OCI-LY7 (cell line): ENCODE measurements at regions of chr20 and their contacts with region 1.

Region 1: GRCh38 chr20:62065669-62066338 is at the start of gene TAF4:
- DNase-seq: peak; percentile 88
- H3K4me3 ChIP-seq: peak within 1 kb of the TSS; percentile 75
- H3K27ac ChIP-seq: peak within 1 kb of the TSS; percentile 66
- H3K4me1 ChIP-seq: peaks cover 46% of the 10 kb centered on the region
- CTCF ChIP-seq: no peak
- total RNA-seq, gene TAF4: 6.7 and 11.2 TPM in 2 replicates

Region 2: DNA sequence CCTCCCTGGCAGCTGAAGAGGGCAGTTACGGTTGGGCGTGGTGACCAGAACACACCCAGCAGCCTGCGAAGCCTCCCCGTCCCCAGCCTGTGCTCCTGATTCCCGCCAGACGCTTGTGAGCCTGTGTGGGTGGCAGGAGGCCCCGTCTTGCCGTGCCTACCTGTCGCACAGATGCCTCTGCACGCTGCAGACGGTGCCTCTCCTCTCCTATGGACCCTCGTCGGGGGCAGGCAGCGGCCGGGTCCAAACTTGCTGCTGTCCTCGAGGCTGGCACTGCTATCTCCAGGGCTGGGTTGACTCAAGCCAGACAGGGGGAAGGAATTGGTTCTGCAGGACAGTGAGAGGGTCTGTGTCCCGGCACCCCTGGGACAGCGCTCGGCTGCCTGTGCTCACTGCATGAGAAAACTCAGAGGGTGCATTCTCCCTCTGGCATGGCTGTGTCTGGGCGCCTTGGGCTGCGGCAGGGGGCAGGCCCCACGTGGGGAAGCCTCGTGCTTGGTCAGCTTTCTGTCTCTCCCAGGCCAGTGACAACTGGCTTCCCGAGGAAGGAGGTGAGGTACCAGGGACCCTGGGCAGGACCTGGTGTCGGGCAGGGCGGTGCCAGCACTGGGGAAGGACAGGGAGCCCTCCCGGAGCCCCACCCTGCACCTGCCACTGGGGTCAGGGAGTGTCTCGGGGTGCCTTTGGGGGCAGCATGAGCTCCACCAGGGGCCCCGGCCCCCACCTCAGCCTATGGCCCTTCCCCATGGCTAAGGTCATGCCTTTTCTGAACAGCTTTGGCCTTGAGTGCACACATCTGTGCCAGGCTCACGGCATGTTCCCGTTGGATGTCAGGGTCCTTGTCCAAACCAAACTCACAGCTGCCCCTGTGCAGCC is 127.6 kb before region 1 on chr20:
- CTCF ChIA-PET with region 1: no interaction called
- POLR2A ChIA-PET with region 1: no interaction called
- intact Hi-C with region 1: no loop called
- DNase-seq: no peak
- H3K4me3 ChIP-seq: no peak overlapping the region
- H3K27ac ChIP-seq: no peak overlapping the region
- H3K4me1 ChIP-seq: no peaks in the 10 kb centered on the region
- CTCF ChIP-seq: no peak

Region 3: GRCh38 chr20:62002882-62003480 is 62.8 kb before region 1 on chr20:
- CTCF ChIA-PET with region 1: no interaction called
- POLR2A ChIA-PET with region 1: no interaction called
- intact Hi-C with region 1: loop called (anchors 5 kb)
- DNase-seq: no peak
- H3K4me3 ChIP-seq: peak overlapping the region; percentile 56
- H3K27ac ChIP-seq: peak overlapping the region; percentile 79
- H3K4me1 ChIP-seq: peaks cover 36% of the 10 kb centered on the region
- CTCF ChIP-seq: no peak

Region 4: GRCh38 chr20:62143118-62143973 is 77.5 kb after region 1 on chr20 and contains the starts of genes PSMA7 and SS18L1:
- CTCF ChIA-PET with region 1: no interaction called
- POLR2A ChIA-PET with region 1: interaction called, 3 read pairs
- intact Hi-C with region 1: loop called (anchors 5 kb)
- DNase-seq: peak; percentile 93
- H3K4me3 ChIP-seq: peak within 1 kb of the TSS; percentile 98
- H3K27ac ChIP-seq: peak within 1 kb of the TSS; percentile 37
- H3K4me1 ChIP-seq: peaks cover 25% of the 10 kb centered on the region
- CTCF ChIP-seq: no peak
- total RNA-seq, gene PSMA7: 247 and 362 TPM in 2 replicates
- total RNA-seq, gene SS18L1: 13.0 and 17.0 TPM in 2 replicates